PC-9 (cell line): ENCODE measurements at regions of chr16 and their contacts with region 1.

Region 1: DNA sequence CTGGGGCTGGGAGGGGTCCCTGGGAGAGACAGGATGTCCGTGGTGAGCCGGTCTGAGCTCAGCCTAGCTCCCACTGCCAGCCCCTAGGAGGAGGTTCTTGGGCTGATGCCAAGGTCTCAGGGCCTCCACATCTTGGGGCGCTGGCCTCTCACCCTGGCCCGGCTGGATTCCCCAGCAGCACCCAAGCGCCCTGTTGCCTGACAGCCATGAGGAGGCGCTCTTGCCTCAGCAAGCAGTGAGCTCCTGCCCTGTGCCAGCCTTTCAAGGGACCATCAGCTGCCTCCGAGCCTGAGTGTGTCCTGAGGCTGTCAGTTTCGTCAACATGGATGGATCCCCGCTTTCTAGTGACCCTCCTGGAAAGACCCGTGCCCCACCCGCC is 234.9 kb upstream of the CIBAR2 start:
- DNase-seq: peak in 1 of 2 experiments; percentile 44
- H3K4me3 ChIP-seq: no peak overlapping the region
- H3K27ac ChIP-seq: no peak overlapping the region
- H3K4me1 ChIP-seq: peaks cover 17% of the 10 kb centered on the region
- H3K27me3 ChIP-seq: no peaks in the 10 kb centered on the region
- CTCF ChIP-seq: peak; percentile 60

Region 2: DNA sequence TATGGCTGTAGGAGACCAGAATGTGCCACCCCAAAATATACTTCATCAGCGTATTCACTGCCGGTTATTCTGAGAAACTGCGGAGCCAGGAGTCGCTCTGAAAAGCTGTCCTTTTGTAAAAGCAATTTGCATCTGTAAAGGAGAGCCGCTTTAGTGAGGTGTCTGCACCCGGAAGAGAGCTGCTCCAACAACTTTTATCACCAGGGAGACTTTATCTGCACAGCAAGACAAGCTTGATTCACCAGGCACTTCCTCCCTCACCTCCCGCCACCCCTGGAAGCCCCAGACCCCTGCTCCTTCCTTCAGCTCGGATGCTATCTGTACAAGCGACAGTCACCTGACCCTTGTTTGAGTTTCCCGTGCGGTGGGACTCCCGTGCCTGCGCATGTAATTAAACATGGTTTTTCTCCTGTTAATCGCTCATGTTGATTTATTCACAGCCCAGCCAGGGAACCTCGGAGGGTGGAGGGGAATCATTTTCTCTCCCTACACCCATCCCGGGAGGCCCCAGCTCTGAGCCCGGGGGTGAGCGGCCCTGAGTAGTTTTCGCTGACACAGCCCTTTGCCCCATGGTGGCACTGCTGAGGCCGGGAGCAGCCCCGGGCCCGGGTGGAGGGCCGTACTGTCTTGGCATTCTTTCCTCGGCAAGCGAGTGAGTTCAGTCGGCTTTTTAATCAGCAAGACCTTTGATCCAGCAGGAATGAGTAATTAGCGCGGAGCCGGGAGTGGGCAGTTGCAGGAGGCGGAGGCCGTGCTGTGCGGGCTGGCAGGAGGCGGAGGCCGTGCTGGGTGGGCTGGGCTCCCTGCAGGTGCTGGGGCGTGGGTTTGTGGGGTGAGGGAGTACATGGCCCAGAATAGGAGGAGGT is 12.3 kb before region 1 on chr16:
- CTCF ChIA-PET with region 1: interaction called, 3 read pairs
- POLR2A ChIA-PET with region 1: no interaction called
- intact Hi-C with region 1: loop called (anchors 1 kb)
- DNase-seq: peak; percentile 70 to 77
- H3K4me3 ChIP-seq: peak overlapping the region; percentile 47; the same call in 1 of the 2 replicates
- H3K27ac ChIP-seq: peak overlapping the region; percentile 35
- H3K4me1 ChIP-seq: peaks cover 28% of the 10 kb centered on the region
- H3K27me3 ChIP-seq: no peaks in the 10 kb centered on the region
- CTCF ChIP-seq: no peak; the same call in 1 of the 2 replicates

Region 3: GRCh38 chr16:85645021-85645664 is 297.9 kb after region 1 on chr16:
- CTCF ChIA-PET with region 1: no interaction called
- POLR2A ChIA-PET with region 1: no interaction called
- intact Hi-C with region 1: loop called (anchors 1 kb)
- DNase-seq: peak; percentile 90 to 93
- H3K4me3 ChIP-seq: peak overlapping the region; percentile 46; the same call in 1 of the 2 replicates
- H3K27ac ChIP-seq: peak overlapping the region; percentile 58
- H3K4me1 ChIP-seq: peaks cover 36% of the 10 kb centered on the region
- H3K27me3 ChIP-seq: no peaks in the 10 kb centered on the region
- CTCF ChIP-seq: no peak